Caco-2 (cell line): ENCODE measurements at regions of chr6 and their contacts with region 1.

Region 1: GRCh38 chr6:147970975-147971374 is 371.7 kb upstream of the SASH1 start:
- DNase-seq: peak in 1 of 2 experiments; percentile 18
- H3K4me3 ChIP-seq: no peak overlapping the region
- H3K4me3 Mint-ChIP-seq: no peak overlapping the region
- H3K27ac Mint-ChIP-seq: no peak overlapping the region
- H3K4me1 ChIP-seq: peaks cover 25% of the 10 kb centered on the region
- H3K4me1 Mint-ChIP-seq: peaks cover 31% of the 10 kb centered on the region
- H3K27me3 ChIP-seq: no peaks in the 10 kb centered on the region
- H3K27me3 Mint-ChIP-seq: no peaks in the 10 kb centered on the region
- CTCF ChIP-seq: peak in 1 of 2 experiments; percentile 43

Region 2: DNA sequence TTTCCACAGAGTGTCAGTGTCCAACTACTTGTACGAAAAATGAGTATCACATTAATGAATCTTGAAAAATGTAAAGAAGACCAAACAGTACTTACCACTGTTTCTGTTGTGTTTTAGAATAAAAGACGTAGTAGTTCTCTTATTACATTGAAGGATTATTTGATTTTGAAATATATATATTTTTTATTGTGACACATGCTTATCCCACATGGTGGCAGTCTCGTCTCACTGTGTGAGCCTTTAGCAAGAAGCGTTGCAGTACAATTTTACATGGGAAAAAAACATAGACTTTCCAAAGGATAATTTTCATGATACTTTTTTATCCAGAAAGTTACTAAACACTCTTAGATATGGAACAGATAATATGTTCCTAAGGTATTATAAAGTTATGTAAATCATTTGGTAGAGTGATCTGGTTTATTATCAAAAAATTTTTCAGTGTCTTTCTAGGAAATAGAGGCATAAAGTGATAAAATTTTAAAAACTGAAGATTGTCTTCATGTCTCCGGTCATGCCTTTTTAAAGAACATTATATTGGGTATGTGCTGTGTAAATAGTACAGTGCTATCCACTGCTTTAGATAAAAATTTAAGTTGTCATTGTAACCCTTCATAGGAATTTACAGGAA is 580.0 kb before region 1 on chr6:
- CTCF ChIA-PET with region 1: no interaction called
- POLR2A ChIA-PET with region 1: no interaction called
- intact Hi-C with region 1: loop called (anchors 5 kb)
- DNase-seq: peak in 1 of 2 experiments; percentile 25
- H3K4me3 ChIP-seq: no peak overlapping the region
- H3K4me3 Mint-ChIP-seq: no peak overlapping the region
- H3K27ac Mint-ChIP-seq: no peak overlapping the region
- H3K4me1 ChIP-seq: no peaks in the 10 kb centered on the region
- H3K4me1 Mint-ChIP-seq: no peaks in the 10 kb centered on the region
- H3K27me3 ChIP-seq: no peaks in the 10 kb centered on the region
- H3K27me3 Mint-ChIP-seq: no peaks in the 10 kb centered on the region
- CTCF ChIP-seq: peak; percentile 31 to 36

Region 3: DNA sequence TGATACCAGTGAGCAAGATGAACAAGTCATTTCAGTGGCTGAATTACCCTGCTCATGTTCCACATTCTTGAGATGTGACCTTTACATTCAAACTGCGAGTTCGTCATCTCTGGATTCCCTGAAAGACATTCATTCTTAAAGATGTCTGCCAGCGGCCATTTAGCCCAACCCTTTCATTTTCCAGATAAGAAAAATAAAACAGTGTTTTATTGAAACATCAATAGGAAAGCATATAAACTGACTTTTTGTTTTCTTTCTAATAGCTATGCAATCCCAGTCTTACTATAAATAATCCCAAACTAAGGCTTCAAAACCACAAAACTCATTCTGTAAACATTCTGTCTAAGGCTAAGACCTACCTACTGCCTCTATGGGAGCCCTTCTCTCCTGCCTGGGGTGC is 328.5 kb before region 1 on chr6:
- CTCF ChIA-PET with region 1: no interaction called
- POLR2A ChIA-PET with region 1: no interaction called
- intact Hi-C with region 1: loop called (anchors 5 kb)
- DNase-seq: peak; percentile 65 to 66
- H3K4me3 ChIP-seq: no peak overlapping the region
- H3K4me3 Mint-ChIP-seq: peak overlapping the region; percentile 40
- H3K27ac Mint-ChIP-seq: peak overlapping the region; percentile 89
- H3K4me1 ChIP-seq: peaks cover 25% of the 10 kb centered on the region
- H3K4me1 Mint-ChIP-seq: peaks cover 31% of the 10 kb centered on the region
- H3K27me3 ChIP-seq: no peaks in the 10 kb centered on the region
- H3K27me3 Mint-ChIP-seq: no peaks in the 10 kb centered on the region
- CTCF ChIP-seq: no peak

Region 4: DNA sequence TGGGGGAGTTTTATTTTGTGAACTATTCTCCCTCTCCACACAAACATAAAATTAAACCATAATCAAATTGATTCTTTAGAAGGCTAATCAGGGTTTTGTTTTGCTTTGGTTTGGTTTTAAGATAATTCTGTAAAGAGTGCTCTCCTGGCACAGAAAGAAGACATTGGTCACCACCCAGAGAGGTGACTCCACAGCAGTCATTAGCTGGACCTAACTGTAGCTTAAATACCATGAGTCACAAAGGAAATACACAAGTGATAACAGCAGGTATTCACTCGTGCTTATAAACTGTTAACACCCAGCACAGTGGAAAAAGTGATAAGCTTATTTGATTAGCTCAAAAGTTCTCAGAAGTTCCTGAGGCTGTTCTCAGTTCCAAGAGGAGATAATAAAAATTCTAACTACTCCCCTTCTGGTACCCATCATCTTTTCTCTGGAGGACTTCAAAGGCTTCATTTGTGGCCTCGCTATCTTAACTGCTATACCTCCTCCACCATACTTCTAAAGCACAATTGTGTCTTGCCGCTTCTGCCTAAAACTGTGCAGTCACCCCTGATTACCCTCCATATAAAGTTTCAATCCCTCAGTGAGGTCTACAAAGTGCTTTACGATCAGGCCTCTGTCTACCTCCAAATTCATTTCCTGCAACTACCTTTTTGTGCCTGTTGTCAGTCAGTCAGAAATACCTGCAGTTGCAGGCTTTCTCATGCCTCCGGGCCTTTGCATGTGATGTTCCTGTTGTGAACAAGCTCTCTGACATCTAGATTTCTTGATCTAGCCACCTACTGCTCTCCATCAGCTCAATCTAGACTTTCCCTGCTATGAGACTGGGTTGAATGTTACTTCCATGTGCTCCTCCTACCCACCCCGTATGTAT is 261.3 kb before region 1 on chr6:
- CTCF ChIA-PET with region 1: no interaction called
- POLR2A ChIA-PET with region 1: no interaction called
- intact Hi-C with region 1: loop called (anchors 1 kb)
- DNase-seq: peak; percentile 46 to 65
- H3K4me3 ChIP-seq: no peak overlapping the region
- H3K4me3 Mint-ChIP-seq: peak overlapping the region; percentile 3
- H3K27ac Mint-ChIP-seq: peak overlapping the region; percentile 50
- H3K4me1 ChIP-seq: peaks cover 44% of the 10 kb centered on the region
- H3K4me1 Mint-ChIP-seq: peaks cover 37% of the 10 kb centered on the region
- H3K27me3 ChIP-seq: no peaks in the 10 kb centered on the region
- H3K27me3 Mint-ChIP-seq: no peaks in the 10 kb centered on the region
- CTCF ChIP-seq: no peak

Region 5: DNA sequence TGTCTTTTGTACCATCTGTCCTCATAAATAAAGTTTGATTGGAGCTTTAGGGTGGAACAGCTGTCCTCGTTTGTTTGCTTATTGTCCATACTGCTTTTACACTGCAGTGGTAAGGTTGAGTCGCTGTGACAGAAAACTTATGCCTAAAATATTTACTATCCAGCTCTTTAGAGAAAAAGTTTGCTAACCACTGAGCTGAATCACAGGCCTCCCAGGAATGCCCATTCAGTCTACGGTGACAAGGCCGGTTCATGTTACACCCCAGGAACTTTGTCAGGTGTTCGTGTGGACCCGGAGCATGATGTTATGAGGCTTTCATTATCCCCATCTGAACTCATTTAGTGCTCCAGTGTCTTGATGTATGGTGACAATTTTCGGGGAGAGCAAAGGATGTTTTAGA is 61.3 kb before region 1 on chr6:
- CTCF ChIA-PET with region 1: no interaction called
- POLR2A ChIA-PET with region 1: no interaction called
- intact Hi-C with region 1: no loop called
- DNase-seq: no peak
- H3K4me3 ChIP-seq: no peak overlapping the region
- H3K4me3 Mint-ChIP-seq: no peak overlapping the region
- H3K27ac Mint-ChIP-seq: no peak overlapping the region
- H3K4me1 ChIP-seq: no peaks in the 10 kb centered on the region
- H3K4me1 Mint-ChIP-seq: no peaks in the 10 kb centered on the region
- H3K27me3 ChIP-seq: no peaks in the 10 kb centered on the region
- H3K27me3 Mint-ChIP-seq: no peaks in the 10 kb centered on the region
- CTCF ChIP-seq: no peak

Region 6: DNA sequence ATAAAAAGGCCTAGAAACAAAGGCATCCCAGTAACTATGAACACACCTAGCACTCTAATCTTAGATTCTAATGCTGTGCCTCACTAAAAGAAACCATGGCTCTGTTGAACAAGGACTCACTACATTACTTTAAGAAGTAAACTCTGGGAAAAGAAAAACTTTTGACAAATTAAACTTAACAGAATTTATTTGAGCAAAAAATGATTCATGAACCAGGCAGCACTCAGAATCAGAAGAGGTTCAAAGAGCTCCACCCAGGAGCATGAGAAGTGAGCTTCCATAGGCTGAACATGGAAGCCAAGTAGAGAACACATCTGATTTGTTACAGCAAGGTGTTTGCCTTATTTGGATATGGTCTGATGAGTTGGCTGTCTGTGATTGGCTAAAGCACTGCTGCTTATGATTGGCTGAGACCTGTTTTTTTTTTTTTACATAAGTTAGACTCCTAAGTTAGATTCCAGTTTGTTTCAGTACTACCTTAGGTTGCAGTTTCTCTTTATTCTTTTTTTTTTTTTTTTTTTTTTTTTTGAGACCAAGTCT is 28.1 kb after region 1 on chr6:
- CTCF ChIA-PET with region 1: no interaction called
- POLR2A ChIA-PET with region 1: no interaction called
- intact Hi-C with region 1: no loop called
- DNase-seq: no peak
- H3K4me3 ChIP-seq: no peak overlapping the region
- H3K4me3 Mint-ChIP-seq: no peak overlapping the region
- H3K27ac Mint-ChIP-seq: no peak overlapping the region
- H3K4me1 ChIP-seq: no peaks in the 10 kb centered on the region
- H3K4me1 Mint-ChIP-seq: peaks cover 9% of the 10 kb centered on the region
- H3K27me3 ChIP-seq: no peaks in the 10 kb centered on the region
- H3K27me3 Mint-ChIP-seq: no peaks in the 10 kb centered on the region
- CTCF ChIP-seq: no peak

Region 7: DNA sequence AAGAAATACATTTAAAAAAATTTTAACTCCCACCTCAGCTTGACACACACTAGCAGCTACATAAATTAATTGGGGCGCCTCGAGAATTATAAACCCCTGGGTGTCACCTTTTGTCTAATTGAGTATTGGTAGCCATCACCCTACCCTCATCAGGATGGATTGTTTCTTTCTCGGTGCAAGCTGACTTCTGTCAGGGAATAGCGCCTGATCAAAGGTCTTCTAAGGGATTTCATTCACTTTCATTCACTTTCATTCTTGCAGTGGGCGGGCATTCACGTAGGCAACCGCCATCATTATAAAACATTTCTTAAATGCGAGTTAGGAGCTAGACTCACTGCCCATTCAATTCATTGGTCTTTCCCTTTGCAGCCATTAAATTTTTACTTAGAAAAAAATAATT is 132.5 kb after region 1 on chr6:
- CTCF ChIA-PET with region 1: no interaction called
- POLR2A ChIA-PET with region 1: no interaction called
- intact Hi-C with region 1: loop called (anchors 1 kb)
- DNase-seq: peak; percentile 38 to 46
- H3K4me3 ChIP-seq: peak overlapping the region; percentile 8; the same call in 1 of the 2 replicates
- H3K4me3 Mint-ChIP-seq: peak overlapping the region; percentile 65
- H3K27ac Mint-ChIP-seq: peak overlapping the region; percentile 72
- H3K4me1 ChIP-seq: peaks cover 54% of the 10 kb centered on the region
- H3K4me1 Mint-ChIP-seq: peaks cover 47% of the 10 kb centered on the region
- H3K27me3 ChIP-seq: no peaks in the 10 kb centered on the region
- H3K27me3 Mint-ChIP-seq: no peaks in the 10 kb centered on the region
- CTCF ChIP-seq: no peak

Region 8: DNA sequence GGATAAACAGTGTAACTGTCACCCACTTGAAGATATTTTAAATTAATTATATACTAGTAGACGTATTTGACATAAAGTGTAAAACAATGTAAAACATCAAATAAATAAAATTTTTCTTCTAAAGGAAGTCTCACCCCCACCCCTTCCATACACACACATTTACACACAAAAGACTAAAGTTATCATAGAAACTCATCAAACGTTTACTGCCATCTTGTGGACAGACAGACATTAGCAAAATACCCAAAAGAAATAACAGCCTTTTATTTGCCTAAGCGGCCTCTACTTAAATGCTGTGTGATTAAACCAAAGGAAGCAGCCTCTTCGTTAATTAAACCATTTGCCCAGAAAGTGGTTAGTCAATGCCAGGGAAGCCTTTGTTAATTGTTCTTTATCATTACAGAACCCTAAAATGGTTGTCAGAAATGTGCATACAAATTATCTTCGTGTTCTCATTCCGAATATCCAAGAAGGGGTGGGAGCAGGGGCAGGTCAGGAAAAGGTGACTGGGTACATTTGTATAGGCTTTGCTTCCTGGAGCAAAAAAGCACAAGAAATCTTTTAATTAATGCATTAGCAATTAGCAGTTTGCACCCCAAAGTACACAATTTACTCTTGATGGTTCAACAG is 195.5 kb after region 1 on chr6:
- CTCF ChIA-PET with region 1: no interaction called
- POLR2A ChIA-PET with region 1: no interaction called
- intact Hi-C with region 1: loop called (anchors 5 kb)
- DNase-seq: peak in 1 of 2 experiments; percentile 44
- H3K4me3 ChIP-seq: no peak overlapping the region
- H3K4me3 Mint-ChIP-seq: no peak overlapping the region
- H3K27ac Mint-ChIP-seq: no peak overlapping the region
- H3K4me1 ChIP-seq: no peaks in the 10 kb centered on the region
- H3K4me1 Mint-ChIP-seq: no peaks in the 10 kb centered on the region
- H3K27me3 ChIP-seq: no peaks in the 10 kb centered on the region
- H3K27me3 Mint-ChIP-seq: no peaks in the 10 kb centered on the region
- CTCF ChIP-seq: peak; percentile 60 to 64

Region 9: DNA sequence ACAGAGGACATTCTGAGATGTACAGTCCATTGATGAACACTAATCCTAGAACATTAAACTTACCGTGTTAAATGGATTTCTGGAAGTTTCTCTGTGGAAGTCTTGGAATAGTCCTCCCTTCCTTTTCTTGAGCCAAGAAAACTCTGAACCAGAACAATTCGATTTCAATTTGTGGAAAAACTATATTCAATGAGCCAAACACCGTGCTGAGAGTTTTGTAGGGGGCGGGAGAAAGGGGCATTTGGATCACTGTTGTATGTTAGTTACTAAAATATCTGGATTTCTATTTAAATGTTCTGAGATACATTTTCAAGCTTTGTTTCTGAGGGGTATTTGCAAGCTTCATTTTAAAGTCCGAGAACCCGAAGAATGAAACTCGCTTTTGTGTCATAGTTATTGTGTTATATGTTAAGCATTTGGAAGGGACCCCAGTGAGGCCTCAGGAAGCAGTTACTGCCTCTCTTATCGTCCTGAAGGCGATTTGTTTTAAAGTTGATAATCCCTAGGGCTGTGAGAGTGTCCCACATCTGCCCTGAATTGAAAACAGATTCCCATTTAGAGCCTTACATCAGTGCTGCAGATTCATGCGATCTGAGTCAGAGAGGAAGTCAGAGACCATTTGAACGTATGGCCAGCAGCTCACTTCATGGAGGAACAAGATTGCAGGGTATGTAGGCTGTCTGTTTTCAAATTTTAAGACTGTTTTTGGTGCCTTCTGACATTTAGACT is 300.9 kb after region 1 on chr6:
- CTCF ChIA-PET with region 1: no interaction called
- POLR2A ChIA-PET with region 1: no interaction called
- intact Hi-C with region 1: no loop called
- DNase-seq: no peak
- H3K4me3 ChIP-seq: no peak overlapping the region
- H3K4me3 Mint-ChIP-seq: no peak overlapping the region
- H3K27ac Mint-ChIP-seq: no peak overlapping the region
- H3K4me1 ChIP-seq: no peaks in the 10 kb centered on the region
- H3K4me1 Mint-ChIP-seq: no peaks in the 10 kb centered on the region
- H3K27me3 ChIP-seq: no peaks in the 10 kb centered on the region
- H3K27me3 Mint-ChIP-seq: no peaks in the 10 kb centered on the region
- CTCF ChIP-seq: no peak